Activated CD8-positive, alpha-beta T cell treated with anti-CD3 and anti-CD28 coated beads for 36 hours (primary cell): ENCODE measurements at regions of chr15 and their contacts with region 1.

Region 1: GRCh38 chr15:88246666-88247446 is 9.7 kb downstream of the NTRK3 start:
- DNase-seq: peak; percentile 81
- ATAC-seq: peak; percentile 92
- H3K4me3 Mint-ChIP-seq: no peak overlapping the region
- H3K27ac Mint-ChIP-seq: no peak overlapping the region
- H3K4me1 Mint-ChIP-seq: peaks cover 5% of the 10 kb centered on the region
- H3K27me3 Mint-ChIP-seq: peaks cover 15% of the 10 kb centered on the region
- CTCF ChIP-seq: peak; percentile 85

Region 2: DNA sequence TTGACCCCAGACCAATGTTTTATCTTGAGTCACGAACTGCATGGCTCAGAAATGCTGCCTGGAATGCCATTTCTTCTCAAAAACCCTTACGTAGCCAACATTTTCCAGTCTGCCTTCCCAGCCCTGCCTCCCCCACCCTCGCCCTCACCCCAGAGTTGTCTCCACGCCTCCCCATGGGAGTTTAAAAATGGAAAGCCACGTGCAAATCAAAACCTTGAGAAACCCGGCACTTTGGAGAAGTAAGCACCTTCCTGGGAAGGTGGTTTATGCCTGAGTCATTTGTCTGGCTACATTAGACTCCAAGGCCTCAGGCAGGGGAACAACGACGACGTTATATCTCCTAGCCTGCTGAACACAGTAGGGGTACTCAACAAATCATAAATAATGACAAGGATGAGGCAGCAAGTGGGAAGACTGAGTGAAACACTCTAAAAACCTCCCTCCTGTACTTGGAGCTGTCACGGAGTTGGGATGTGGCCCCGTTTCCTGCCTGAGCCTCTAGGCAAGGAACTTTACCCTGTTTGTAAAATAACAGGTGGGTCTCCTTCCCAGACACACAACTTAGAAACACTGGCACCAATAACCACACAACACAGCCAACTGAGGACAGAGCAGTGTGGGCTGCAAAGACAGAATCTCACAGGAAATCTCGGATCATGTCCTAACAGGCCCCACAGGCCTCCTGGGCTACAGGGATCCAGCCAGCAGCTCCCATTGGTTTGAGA is 169.4 kb before region 1 on chr15:
- CTCF ChIA-PET with region 1: no interaction called
- POLR2A ChIA-PET with region 1: no interaction called
- intact Hi-C with region 1: no loop called
- DNase-seq: no peak
- ATAC-seq: no peak
- H3K4me3 Mint-ChIP-seq: no peak overlapping the region
- H3K27ac Mint-ChIP-seq: no peak overlapping the region
- H3K4me1 Mint-ChIP-seq: no peaks in the 10 kb centered on the region
- H3K27me3 Mint-ChIP-seq: no peaks in the 10 kb centered on the region
- CTCF ChIP-seq: no peak

Region 3: DNA sequence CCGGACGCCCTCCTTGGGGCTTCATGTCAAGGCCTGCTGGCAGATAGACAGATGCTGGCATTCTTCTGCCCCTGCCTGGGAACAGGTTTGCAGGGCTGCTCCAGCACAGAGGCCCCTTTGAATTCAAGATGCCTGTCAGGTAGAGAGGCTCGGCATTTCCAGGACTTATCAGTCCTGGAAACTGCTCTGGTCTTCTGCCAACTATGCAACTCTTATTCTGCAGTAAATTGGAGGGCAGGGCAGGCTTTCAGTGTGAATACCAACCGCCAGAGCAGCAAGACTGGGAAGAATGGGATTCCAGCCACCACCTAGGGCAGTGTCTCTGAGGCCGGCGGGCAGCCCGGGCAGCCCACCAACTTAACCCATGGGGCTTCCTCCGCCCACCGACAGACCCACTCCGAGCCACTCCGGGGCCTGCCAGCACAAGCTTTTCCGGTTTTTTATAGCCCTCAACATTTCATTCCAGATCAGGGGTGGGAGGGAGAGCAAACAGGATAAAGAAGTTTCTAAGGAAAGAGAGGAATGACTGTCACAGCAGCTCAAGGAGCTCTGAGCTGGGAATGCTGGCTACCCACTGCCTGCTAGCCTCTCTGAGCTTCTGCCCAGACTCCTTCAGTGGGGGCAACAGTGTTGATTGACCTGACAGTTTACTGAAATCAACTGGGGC is 131.2 kb before region 1 on chr15:
- CTCF ChIA-PET with region 1: no interaction called
- POLR2A ChIA-PET with region 1: no interaction called
- intact Hi-C with region 1: no loop called
- DNase-seq: no peak
- ATAC-seq: no peak
- H3K4me3 Mint-ChIP-seq: no peak overlapping the region
- H3K27ac Mint-ChIP-seq: no peak overlapping the region
- H3K4me1 Mint-ChIP-seq: no peaks in the 10 kb centered on the region
- H3K27me3 Mint-ChIP-seq: no peaks in the 10 kb centered on the region
- CTCF ChIP-seq: no peak

Region 4: GRCh38 chr15:88262064-88262463 is 15.2 kb after region 1 on chr15:
- CTCF ChIA-PET with region 1: interaction called, 13 read pairs
- POLR2A ChIA-PET with region 1: no interaction called
- intact Hi-C with region 1: no loop called
- DNase-seq: no peak
- ATAC-seq: no peak
- H3K4me3 Mint-ChIP-seq: no peak overlapping the region
- H3K27ac Mint-ChIP-seq: no peak overlapping the region
- H3K4me1 Mint-ChIP-seq: peaks cover 7% of the 10 kb centered on the region
- H3K27me3 Mint-ChIP-seq: peaks cover 47% of the 10 kb centered on the region
- CTCF ChIP-seq: no peak

Region 5: DNA sequence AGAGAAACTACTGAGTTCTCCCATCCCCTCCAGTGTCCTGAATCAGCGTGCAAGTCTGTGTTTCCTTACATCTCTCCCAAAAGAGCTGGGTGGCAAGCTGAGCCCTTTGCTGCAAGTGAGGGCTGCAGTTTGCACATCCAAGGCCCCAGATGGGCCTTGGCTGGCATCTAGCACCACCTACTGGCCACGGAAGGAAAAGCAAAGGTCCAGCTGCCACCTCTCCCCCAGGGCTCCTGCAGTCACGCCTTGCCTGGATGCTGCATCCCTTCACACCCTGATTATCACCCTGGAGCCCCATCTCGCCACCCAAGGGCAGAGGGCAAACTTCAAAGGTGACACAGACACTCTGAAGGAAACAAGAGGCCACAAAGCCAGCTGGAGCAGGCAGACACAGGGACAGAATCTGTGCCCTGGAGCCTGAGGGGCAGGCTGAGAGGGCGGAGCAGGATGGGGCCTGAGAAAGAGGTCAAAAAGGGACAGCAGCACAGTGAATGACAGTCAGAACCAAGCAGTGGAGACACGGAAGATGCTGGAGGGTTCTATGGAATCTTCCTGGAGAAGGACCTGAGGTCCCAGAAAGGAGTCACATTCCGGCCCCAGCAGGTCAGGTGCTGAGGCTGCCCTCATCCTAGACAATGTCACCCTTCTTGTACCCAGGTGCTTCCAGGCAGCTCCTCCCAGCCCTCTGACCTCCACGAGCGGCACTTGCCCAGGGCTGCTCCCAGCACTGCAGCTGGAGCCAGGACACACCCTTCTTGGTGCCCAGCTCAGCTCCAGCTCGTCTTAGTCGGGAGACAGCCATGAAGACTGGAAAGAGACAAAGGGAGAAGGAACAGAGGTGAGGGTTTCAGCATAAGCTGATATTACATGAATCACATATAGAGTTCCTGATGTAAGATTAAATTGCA is 28.0 kb after region 1 on chr15:
- CTCF ChIA-PET with region 1: interaction called, 64 read pairs
- POLR2A ChIA-PET with region 1: no interaction called
- intact Hi-C with region 1: no loop called
- DNase-seq: peak; percentile 69
- ATAC-seq: peak; percentile 77
- H3K4me3 Mint-ChIP-seq: no peak overlapping the region
- H3K27ac Mint-ChIP-seq: no peak overlapping the region
- H3K4me1 Mint-ChIP-seq: no peaks in the 10 kb centered on the region
- H3K27me3 Mint-ChIP-seq: peaks cover 10% of the 10 kb centered on the region
- CTCF ChIP-seq: peak; percentile 80

Region 6: GRCh38 chr15:88454867-88455810 is 208.3 kb after region 1 on chr15:
- CTCF ChIA-PET with region 1: interaction called, 11 read pairs
- POLR2A ChIA-PET with region 1: no interaction called
- intact Hi-C with region 1: loop called (anchors 10 kb)
- DNase-seq: peak; percentile 67
- ATAC-seq: peak; percentile 89
- H3K4me3 Mint-ChIP-seq: no peak overlapping the region
- H3K27ac Mint-ChIP-seq: no peak overlapping the region
- H3K4me1 Mint-ChIP-seq: peaks cover under 1% of the 10 kb centered on the region
- H3K27me3 Mint-ChIP-seq: no peaks in the 10 kb centered on the region
- CTCF ChIP-seq: peak; percentile 67